T-cell (primary cell): ENCODE measurements at regions of chr1 and their contacts with region 1.

Region 1: GRCh38 chr1:40421431-40422384 is 28.6 kb upstream of the ZFP69B start:
- DNase-seq: no peak
- ATAC-seq: no peak
- H3K4me3 ChIP-seq: no peak overlapping the region
- H3K4me3 Mint-ChIP-seq: no peak overlapping the region
- H3K27ac ChIP-seq: no peak overlapping the region
- H3K27ac Mint-ChIP-seq: peak overlapping the region; percentile 56 to 69
- H3K4me1 ChIP-seq: no peaks in the 10 kb centered on the region
- H3K4me1 Mint-ChIP-seq: peaks cover 8 to 28% (median 8%) of the 10 kb centered on the region in 3 donors
- H3K27me3 ChIP-seq: no peaks in the 10 kb centered on the region
- H3K27me3 Mint-ChIP-seq: no peaks in the 10 kb centered on the region

Region 2: DNA sequence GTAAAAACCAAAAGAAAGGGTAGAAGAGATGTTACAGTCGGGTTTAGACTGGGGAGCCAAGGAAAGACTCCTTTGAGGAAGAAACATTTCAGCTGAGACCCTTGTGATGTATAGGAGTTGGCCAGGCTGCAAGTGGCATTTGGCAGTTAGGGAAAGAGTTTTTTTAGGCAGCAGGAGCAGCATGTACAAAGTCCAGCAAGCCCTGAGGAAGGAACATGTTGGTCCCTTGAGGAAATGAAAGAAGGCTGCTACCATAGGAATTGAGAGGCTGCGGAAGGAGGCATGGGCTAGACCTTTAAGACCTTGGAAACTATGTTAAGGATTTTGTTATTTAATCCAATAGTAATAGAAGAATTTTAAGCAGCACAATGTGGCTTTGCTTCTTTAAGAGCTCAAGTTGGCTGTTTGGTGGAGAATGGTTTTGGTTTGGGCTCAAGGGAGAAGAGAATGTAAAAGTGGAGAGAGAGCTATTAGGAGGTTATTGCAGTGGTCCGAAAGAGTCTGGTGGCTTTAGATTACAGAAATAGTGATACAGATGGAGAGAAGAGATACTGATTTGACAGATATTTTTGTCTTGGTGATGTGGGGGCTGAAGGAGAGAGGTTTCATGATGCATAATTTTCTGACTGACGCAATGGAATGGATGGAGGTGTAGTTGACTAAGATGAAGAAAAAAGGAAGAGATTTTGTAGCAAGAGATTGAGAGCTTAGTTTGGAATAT is 21.6 kb before region 1 on chr1:
- CTCF ChIA-PET with region 1: no interaction called
- POLR2A ChIA-PET with region 1: no interaction called
- DNase-seq: no peak
- ATAC-seq: no peak
- H3K4me3 ChIP-seq: no peak overlapping the region
- H3K4me3 Mint-ChIP-seq: peak overlapping the region; percentile 11 to 42 (median 22)
- H3K27ac ChIP-seq: peak overlapping the region; percentile 58
- H3K27ac Mint-ChIP-seq: peak overlapping the region; percentile 77 to 88
- H3K4me1 ChIP-seq: peaks cover 59 to 66% of the 10 kb centered on the region in 2 experiments
- H3K4me1 Mint-ChIP-seq: peaks cover 93 to 95% (median 94%) of the 10 kb centered on the region in 3 donors
- H3K27me3 ChIP-seq: no peaks in the 10 kb centered on the region
- H3K27me3 Mint-ChIP-seq: no peaks in the 10 kb centered on the region

Region 3: GRCh38 chr1:40438391-40439015 is 16.8 kb after region 1 on chr1:
- CTCF ChIA-PET with region 1: interaction called, 3 to 12 read pairs
- POLR2A ChIA-PET with region 1: interaction called in 1 of 2 experiments, 3 read pairs
- DNase-seq: peak in 9 of 35 experiments; percentile 10 to 62 (median 14)
- ATAC-seq: peak; percentile 32 to 55 (median 46)
- H3K4me3 ChIP-seq: no peak overlapping the region
- H3K4me3 Mint-ChIP-seq: no peak overlapping the region
- H3K27ac ChIP-seq: no peak overlapping the region
- H3K27ac Mint-ChIP-seq: no peak overlapping the region
- H3K4me1 ChIP-seq: no peaks in the 10 kb centered on the region
- H3K4me1 Mint-ChIP-seq: peaks cover 3 to 10% (median 5%) of the 10 kb centered on the region in 3 donors
- H3K27me3 ChIP-seq: no peaks in the 10 kb centered on the region
- H3K27me3 Mint-ChIP-seq: no peaks in the 10 kb centered on the region